HEK293 (cell line): ENCODE measurements at regions of chr1 and their contacts with region 1.

Region 1: GRCh38 chr1:17319561-17320350 is 11.8 kb downstream of the PADI4 start:
- H3K4me3 ChIP-seq: no peak overlapping the region
- H3K27ac ChIP-seq: no peak overlapping the region
- H3K4me1 ChIP-seq: no peaks in the 10 kb centered on the region
- CTCF ChIP-seq: no peak

Region 2: GRCh38 chr1:17297991-17298390 is 21.8 kb before region 1 on chr1:
- CTCF ChIA-PET with region 1: no interaction called
- POLR2A ChIA-PET with region 1: no interaction called
- H3K4me3 ChIP-seq: no peak overlapping the region
- H3K27ac ChIP-seq: no peak overlapping the region
- H3K4me1 ChIP-seq: no peaks in the 10 kb centered on the region
- CTCF ChIP-seq: no peak

Region 3: GRCh38 chr1:17335821-17336710 is 16.3 kb after region 1 on chr1:
- CTCF ChIA-PET with region 1: interaction called, 13 read pairs
- POLR2A ChIA-PET with region 1: no interaction called
- H3K4me3 ChIP-seq: no peak overlapping the region
- H3K27ac ChIP-seq: no peak overlapping the region
- H3K4me1 ChIP-seq: no peaks in the 10 kb centered on the region
- CTCF ChIP-seq: no peak; the same call in 1 of the 2 replicates